Body of pancreas (tissue), 4 donors: ENCODE measurements at regions of chr11 and their contacts with region 1.

Region 1: GRCh38 chr11:78564490-78565467 is 9.9 kb downstream of the NARS2 start:
- DNase-seq: peak; percentile 34 to 74 (median 48)
- ATAC-seq: peak; percentile 48
- H3K4me3 ChIP-seq: no peak overlapping the region
- H3K27ac ChIP-seq: no peak overlapping the region
- H3K4me1 ChIP-seq: peaks cover 24% of the 10 kb centered on the region
- H3K27me3 ChIP-seq: no peaks in the 10 kb centered on the region
- CTCF ChIP-seq: peak; percentile 66 to 91 (median 78)
- POLR2A ChIP-seq: no peak

Region 2: DNA sequence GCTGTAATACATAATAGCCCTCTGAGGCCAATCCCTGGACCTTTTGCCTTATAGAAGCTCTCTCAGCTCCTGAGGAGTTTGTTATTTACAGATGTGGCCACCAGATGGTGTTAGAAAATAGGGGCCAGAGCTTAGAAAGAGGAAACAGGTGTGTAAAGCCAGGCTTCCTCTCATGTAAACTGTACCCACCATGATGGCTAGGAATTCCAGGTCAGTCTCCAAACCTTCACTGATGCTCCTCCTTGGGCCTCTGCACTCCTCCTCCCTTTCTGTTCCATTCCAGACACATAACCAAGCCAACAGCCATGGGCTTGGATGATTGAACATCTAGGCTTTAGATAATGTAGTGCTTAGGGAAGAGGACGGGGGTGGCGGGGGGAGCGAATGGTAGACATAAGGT is 336.3 kb before region 1 on chr11:
- intact Hi-C with region 1: loop called (anchors 5 kb)
- DNase-seq: peak in 3 of 4 donors; percentile 26 to 63 (median 45)
- ATAC-seq: peak; percentile 72
- H3K4me3 ChIP-seq: no peak overlapping the region
- H3K27ac ChIP-seq: no peak overlapping the region
- H3K4me1 ChIP-seq: no peaks in the 10 kb centered on the region
- H3K27me3 ChIP-seq: no peaks in the 10 kb centered on the region
- CTCF ChIP-seq: peak in 6 of 7 experiments; percentile 33 to 74 (median 54)
- POLR2A ChIP-seq: no peak